ENCODE measurements at regions of chr6 and their contacts with region 1.

Region 1: GRCh38 chr6:73262671-73263569 is at the start of gene KHDC1:
- DNase-seq: peak; percentile 44
- H3K4me3 ChIP-seq: peak within 1 kb of the TSS; percentile 56 to 67 (median 60)
- H3K27ac ChIP-seq: peak within 1 kb of the TSS; percentile 12
- H3K4me1 ChIP-seq: peaks cover 15% of the 10 kb centered on the region
- H3K27me3 ChIP-seq: no peaks in the 10 kb centered on the region
- CTCF ChIP-seq: no peak
- POLR2A ChIP-seq: peak; percentile 28
- total RNA-seq, gene KHDC1: 3.3 and 3.7 TPM in 2 replicates

Region 2: GRCh38 chr6:73062837-73063236 is 200.1 kb before region 1 on chr6:
- CTCF ChIA-PET with region 1: no interaction called
- POLR2A ChIA-PET with region 1: no interaction called
- dilution Hi-C with region 1: no loop called
- intact Hi-C with region 1: no loop called
- DNase-seq: no peak
- H3K4me3 ChIP-seq: no peak overlapping the region
- H3K27ac ChIP-seq: no peak overlapping the region
- H3K4me1 ChIP-seq: no peaks in the 10 kb centered on the region
- H3K27me3 ChIP-seq: no peaks in the 10 kb centered on the region
- CTCF ChIP-seq: no peak
- POLR2A ChIP-seq: no peak

Region 3: DNA sequence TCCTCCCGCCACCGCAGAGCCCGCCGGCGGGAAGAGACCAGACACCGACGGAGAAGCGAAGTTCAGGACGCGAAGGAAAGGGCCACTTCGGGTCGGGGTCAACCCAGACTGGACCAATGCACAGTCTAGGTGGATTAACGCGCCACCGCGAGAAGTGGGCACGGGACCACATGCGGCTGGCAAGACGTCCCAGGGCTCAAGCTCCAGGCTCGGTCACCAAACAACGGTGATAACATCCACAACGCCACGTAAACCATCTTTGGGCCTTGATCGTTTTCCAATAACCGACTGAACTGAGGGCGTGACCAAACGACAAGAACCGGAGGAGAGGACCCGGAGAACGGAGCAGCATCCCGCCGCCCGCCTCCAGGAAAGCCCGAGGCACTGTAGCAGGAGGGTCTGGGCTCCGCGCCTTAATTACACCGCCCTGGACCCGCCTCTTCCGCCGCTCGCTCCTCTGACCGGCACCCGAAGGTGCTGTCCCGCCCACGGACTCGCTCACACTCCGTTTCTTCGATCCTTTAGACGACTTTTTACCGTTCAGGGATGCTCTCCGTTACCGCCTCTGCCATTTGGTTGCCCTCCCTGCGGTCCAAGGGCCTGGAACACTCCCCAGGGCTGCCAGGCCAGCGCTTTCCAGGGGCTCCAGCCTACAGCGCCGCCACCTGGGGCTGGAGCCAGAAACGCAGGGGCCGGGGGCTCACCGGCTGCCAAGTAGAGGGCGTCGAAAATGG is 47.0 kb after region 1 on chr6:
- CTCF ChIA-PET with region 1: interaction called, 4 read pairs
- POLR2A ChIA-PET with region 1: no interaction called
- dilution Hi-C with region 1: no loop called
- intact Hi-C with region 1: loop called (anchors 1 kb)
- DNase-seq: peak; percentile 68
- H3K4me3 ChIP-seq: peak overlapping the region; percentile 60 to 83 (median 71)
- H3K27ac ChIP-seq: peak overlapping the region; percentile 19
- H3K4me1 ChIP-seq: peaks cover 12% of the 10 kb centered on the region
- H3K27me3 ChIP-seq: peaks cover 3 to 4% of the 10 kb centered on the region in 2 experiments
- CTCF ChIP-seq: peak; percentile 54 to 69
- POLR2A ChIP-seq: peak; percentile 86

Measured in endothelial cell of umbilical vein (primary cell).